ENCODE measurements at regions of chr19 and their contacts with region 1.

Region 1: GRCh38 chr19:42108527-42109389 is 23.5 kb downstream of the POU2F2 start:
- DNase-seq: peak; percentile 95
- ATAC-seq: peak; percentile 99
- H3K4me3 Mint-ChIP-seq: no peak overlapping the region
- H3K27ac Mint-ChIP-seq: peak overlapping the region; percentile 44
- H3K4me1 Mint-ChIP-seq: peaks cover 50% of the 10 kb centered on the region
- H3K27me3 Mint-ChIP-seq: no peaks in the 10 kb centered on the region
- CTCF ChIP-seq: peak; percentile 100

Region 2: GRCh38 chr19:42095814-42096230 is 12.9 kb before region 1 on chr19:
- CTCF ChIA-PET with region 1: interaction called, 23 read pairs
- POLR2A ChIA-PET with region 1: no interaction called
- intact Hi-C with region 1: no loop called
- DNase-seq: no peak
- ATAC-seq: no peak
- H3K4me3 Mint-ChIP-seq: no peak overlapping the region
- H3K27ac Mint-ChIP-seq: no peak overlapping the region
- H3K4me1 Mint-ChIP-seq: peaks cover 5% of the 10 kb centered on the region
- H3K27me3 Mint-ChIP-seq: no peaks in the 10 kb centered on the region
- CTCF ChIP-seq: no peak

Region 3: DNA sequence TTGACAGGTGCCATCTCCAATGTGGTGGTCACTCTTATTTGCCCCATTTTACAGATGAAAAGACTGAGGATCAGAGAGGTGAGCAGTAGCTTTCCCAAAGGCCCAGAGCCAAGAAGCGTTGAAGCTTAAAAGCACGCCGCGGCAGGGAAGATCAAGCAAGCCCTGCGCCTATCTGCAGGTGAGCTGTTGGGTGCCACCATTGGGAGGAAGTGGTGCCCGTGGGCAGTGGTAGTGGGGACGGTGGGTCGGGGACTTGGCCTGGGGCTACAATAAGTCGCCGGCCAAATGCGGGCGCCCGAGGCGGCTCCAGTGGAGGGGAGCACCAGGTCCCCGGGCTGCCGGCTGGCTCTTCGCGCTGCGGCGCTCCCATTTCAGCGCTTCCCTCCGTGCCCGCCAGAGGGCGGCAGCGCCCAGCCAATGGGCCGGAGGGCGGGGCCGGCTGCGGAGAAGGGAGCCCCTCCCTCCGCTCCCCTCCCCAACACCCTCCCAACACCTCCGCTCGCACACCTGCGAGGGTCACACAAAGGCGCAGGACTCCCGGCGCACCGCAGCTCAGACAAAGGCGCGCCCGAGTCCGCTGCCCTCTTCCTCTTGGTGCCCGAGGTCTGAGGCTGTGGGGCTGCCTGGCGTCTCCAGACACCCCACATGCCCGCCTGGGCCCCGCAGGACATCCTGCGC is 24.2 kb after region 1 on chr19:
- CTCF ChIA-PET with region 1: interaction called, 36 read pairs
- POLR2A ChIA-PET with region 1: interaction called, 3 read pairs
- intact Hi-C with region 1: loop called (anchors 2 kb)
- DNase-seq: peak; percentile 81
- ATAC-seq: peak; percentile 74
- H3K4me3 Mint-ChIP-seq: peak overlapping the region; percentile 78
- H3K27ac Mint-ChIP-seq: peak overlapping the region; percentile 79
- H3K4me1 Mint-ChIP-seq: peaks cover 40% of the 10 kb centered on the region
- H3K27me3 Mint-ChIP-seq: no peaks in the 10 kb centered on the region
- CTCF ChIP-seq: peak; percentile 99

Region 4: GRCh38 chr19:42176990-42177685 is 68.4 kb after region 1 on chr19:
- CTCF ChIA-PET with region 1: interaction called, 21 read pairs
- POLR2A ChIA-PET with region 1: interaction called, 3 read pairs
- intact Hi-C with region 1: no loop called
- DNase-seq: peak; percentile 80
- ATAC-seq: peak; percentile 91
- H3K4me3 Mint-ChIP-seq: no peak overlapping the region
- H3K27ac Mint-ChIP-seq: no peak overlapping the region
- H3K4me1 Mint-ChIP-seq: peaks cover 12% of the 10 kb centered on the region
- H3K27me3 Mint-ChIP-seq: peaks cover 17% of the 10 kb centered on the region
- CTCF ChIP-seq: peak; percentile 25

Region 5: DNA sequence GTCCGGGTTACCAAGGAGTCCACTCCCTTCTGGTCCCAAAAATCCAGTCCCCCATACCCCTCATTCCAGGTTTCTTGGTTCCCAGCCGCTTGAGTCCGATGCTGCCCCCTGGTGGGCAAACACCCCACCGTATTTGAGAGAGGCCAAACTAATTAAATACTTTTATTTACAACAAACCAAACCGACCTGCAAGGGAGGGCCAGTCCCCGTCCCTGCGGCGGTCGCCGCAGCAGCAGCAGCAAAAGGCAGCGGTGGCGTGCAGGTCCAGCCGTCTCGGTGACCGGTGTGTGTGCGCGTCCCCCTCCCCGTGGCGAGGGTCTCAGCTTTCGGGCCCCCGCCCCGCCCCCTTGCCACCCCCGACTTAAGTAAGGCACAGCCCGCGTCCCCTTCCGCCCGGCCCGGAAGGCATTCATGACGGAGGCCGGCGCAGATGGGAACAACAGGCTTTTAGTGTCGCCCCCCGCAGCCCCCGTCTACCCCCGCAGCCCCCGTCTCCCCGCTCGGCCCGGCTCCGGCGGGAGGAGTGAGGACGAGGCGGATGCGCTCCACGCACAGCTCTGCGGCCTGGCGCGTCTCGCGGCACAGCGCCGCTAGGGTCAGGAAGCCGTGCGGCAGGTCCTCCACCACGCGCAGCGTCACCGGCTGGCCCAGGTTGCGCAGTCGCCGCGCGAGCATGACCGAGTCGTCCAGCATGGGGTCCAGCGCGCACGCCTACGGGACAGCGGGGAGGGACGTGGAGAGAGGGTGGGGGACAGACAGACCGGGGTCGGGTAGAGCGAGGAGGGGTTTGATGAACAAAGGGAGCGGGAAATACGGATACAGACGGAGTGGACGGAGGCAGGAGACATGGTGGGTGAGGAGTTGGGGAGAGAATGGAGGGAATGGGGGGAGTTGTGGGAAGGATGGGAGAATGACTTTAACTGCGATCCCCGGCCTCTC is 292.9 kb after region 1 on chr19:
- CTCF ChIA-PET with region 1: interaction called, 10 read pairs
- POLR2A ChIA-PET with region 1: no interaction called
- intact Hi-C with region 1: no loop called
- DNase-seq: peak; percentile 88
- ATAC-seq: peak; percentile 47
- H3K4me3 Mint-ChIP-seq: peak overlapping the region; percentile 73
- H3K27ac Mint-ChIP-seq: peak overlapping the region; percentile 75
- H3K4me1 Mint-ChIP-seq: peaks cover 40% of the 10 kb centered on the region
- H3K27me3 Mint-ChIP-seq: no peaks in the 10 kb centered on the region
- CTCF ChIP-seq: peak; percentile 95